ENCODE measurements at regions of chr10 and their contacts with region 1.

Region 1: GRCh38 chr10:32017021-32017420 is 39.2 kb downstream of the KIF5B start:
- DNase-seq: no peak
- ATAC-seq: no peak

Region 2: GRCh38 chr10:32033171-32033570 is 16.1 kb after region 1 on chr10:
- intact Hi-C with region 1: loop called (anchors 2 kb)
- DNase-seq: no peak
- ATAC-seq: no peak